Activated T-helper 1 cell treated with anti-CD3 and anti-CD28 coated beads, Interleukin-12 subunit alpha, Interleukin-12 subunit beta, Interleukin-2, Interleukin-4 antibody, amounts not matched to agents 30 ng/mL and 10 ng/mL and 1 ng/mL, durations not matched to agents 14 hours and 24 hours and 36 hours (primary cell): ENCODE measurements at regions of chr9 and their contacts with region 1.

Region 1: GRCh38 chr9:133459476-133460404 is at the start of gene CACFD1:
- DNase-seq: peak; percentile 80
- H3K4me3 Mint-ChIP-seq: peak within 1 kb of the TSS; percentile 86
- H3K27ac Mint-ChIP-seq: peak within 1 kb of the TSS; percentile 77
- H3K4me1 Mint-ChIP-seq: no peaks in the 10 kb centered on the region
- H3K27me3 Mint-ChIP-seq: peaks cover 11% of the 10 kb centered on the region
- total RNA-seq, gene CACFD1: 1.0 and 1.1 TPM in 2 replicates

Region 2: GRCh38 chr9:133121198-133121939 is 338.4 kb before region 1 on chr9 and contains the start of gene RALGDS:
- intact Hi-C with region 1: loop called (anchors 1 kb)
- DNase-seq: peak; percentile 84
- H3K4me3 Mint-ChIP-seq: peak within 1 kb of the TSS; percentile 86
- H3K27ac Mint-ChIP-seq: peak within 1 kb of the TSS; percentile 94
- H3K4me1 Mint-ChIP-seq: peaks cover 61% of the 10 kb centered on the region
- H3K27me3 Mint-ChIP-seq: no peaks in the 10 kb centered on the region
- total RNA-seq, gene RALGDS: 88.7 and 94.4 TPM in 2 replicates

Region 3: DNA sequence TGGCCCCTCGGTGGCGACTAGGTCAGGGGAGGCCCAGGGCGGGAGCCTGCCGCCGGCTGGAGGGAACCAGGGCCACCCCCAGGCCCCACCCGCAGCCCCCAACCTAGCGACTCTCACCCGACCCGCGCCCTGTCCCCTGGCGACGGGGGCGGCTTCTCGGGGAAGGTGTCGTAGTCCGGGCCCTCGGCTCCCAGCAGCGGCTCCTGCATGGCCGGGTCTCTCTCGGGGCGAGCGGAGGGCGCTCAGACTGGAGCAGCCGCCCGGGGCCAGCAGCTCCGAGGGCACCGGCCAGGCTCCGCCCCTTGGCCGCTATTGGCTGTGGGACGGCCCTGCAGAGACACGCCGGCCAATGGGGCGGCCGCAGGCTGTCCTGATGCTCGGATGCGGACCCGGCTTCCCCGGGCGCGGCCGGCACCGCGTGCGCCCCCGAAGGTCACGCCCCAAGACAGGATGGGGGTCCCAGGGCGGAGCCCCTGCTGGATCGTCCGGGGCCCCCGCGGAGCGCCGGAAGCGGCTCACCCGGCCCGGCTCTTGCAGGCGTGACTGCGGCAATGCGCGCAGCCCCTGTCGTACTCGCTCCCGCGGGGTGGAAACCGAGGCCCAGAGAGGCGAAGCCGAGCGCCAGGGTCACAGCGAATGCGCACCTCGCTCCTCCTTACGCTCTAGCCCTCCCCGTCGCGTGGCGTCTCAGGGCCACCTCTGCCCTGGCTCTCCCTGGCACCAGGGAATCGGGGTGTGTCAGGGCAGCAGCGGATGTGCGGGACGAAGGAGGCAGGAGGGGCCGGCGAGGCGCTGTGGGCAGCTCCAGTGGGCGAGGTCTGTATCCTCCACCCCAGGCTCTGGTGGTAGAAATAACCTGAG is 19.3 kb after region 1 on chr9 and contains the start of gene SLC2A6:
- intact Hi-C with region 1: loop called (anchors 1 kb)
- DNase-seq: peak; percentile 82
- H3K4me3 Mint-ChIP-seq: peak within 1 kb of the TSS; percentile 79
- H3K27ac Mint-ChIP-seq: no peak within 1 kb of the TSS
- H3K4me1 Mint-ChIP-seq: peaks cover 6% of the 10 kb centered on the region
- H3K27me3 Mint-ChIP-seq: peaks cover 13% of the 10 kb centered on the region
- total RNA-seq, gene SLC2A6: 4.1 and 4.6 TPM in 2 replicates